ENCODE measurements at regions of chr5 and their contacts with region 1.

Region 1: DNA sequence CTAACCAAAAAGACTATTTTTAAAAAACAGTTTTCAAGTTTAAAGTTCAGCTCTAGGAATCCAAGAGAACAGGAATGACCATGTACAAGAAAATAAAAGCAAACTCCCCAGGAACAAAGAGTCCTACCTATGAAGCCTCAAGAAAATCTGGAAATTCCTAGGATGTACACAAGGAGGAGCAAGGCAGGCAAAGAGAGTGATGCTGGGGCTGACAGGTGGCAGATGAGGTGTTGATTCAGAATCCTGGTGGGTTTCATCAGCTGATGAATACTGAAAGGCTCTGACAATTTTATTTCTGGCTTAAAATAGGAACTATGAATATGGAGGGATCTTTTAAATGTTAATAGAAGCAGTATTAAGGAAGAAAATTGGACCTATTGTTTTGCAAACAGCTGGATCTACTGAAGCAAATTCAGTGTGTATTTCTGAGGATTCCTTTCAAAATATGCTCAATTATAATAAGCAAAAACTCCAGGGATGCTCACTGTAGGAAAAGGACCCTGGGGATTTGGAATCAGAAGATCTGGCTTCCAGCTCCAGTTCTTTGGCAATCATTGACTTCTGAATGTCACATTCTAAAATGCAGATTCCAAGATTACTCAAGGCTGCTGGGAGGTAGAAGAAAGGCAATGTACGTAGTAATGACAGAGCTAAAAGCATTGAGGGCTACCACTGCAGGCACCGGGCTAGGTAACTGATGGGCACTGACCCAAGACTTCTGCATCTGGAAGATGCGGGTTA is 28.0 kb upstream of the SH3RF2 start:
- DNase-seq: peak; percentile 51
- H3K4me3 Mint-ChIP-seq: no peak overlapping the region
- H3K27ac Mint-ChIP-seq: no peak overlapping the region
- H3K4me1 Mint-ChIP-seq: peaks cover 5% of the 10 kb centered on the region
- H3K27me3 Mint-ChIP-seq: no peaks in the 10 kb centered on the region
- CTCF ChIP-seq: peak; percentile 62

Region 2: DNA sequence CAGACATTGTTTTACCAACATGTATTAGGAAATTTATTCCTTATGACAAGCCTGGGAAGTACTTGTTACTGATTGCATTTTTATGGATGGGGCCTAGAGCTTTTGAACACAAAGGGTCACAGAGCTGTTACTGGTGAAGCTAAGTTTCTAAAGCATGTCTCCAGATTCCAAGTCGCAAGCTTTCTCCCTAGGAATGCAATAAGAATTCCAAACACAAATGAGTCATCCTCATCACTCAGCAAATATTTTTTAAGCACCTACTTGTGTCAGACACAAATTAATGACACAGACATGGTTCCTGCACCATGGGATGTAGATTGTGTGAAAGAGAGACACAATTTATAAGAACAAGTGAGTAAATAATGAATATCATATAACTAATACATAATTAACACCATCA is 17.0 kb after region 1 on chr5:
- CTCF ChIA-PET with region 1: interaction called, 47 read pairs
- POLR2A ChIA-PET with region 1: interaction called, 7 read pairs
- intact Hi-C with region 1: no loop called
- DNase-seq: peak; percentile 80
- H3K4me3 Mint-ChIP-seq: no peak overlapping the region
- H3K27ac Mint-ChIP-seq: peak overlapping the region; percentile 84
- H3K4me1 Mint-ChIP-seq: peaks cover 37% of the 10 kb centered on the region
- H3K27me3 Mint-ChIP-seq: no peaks in the 10 kb centered on the region
- CTCF ChIP-seq: no peak

Region 3: GRCh38 chr5:145946112-145946861 is 37.9 kb after region 1 on chr5:
- CTCF ChIA-PET with region 1: interaction called, 31 read pairs
- POLR2A ChIA-PET with region 1: interaction called, 32 read pairs
- intact Hi-C with region 1: no loop called
- DNase-seq: peak; percentile 72
- H3K4me3 Mint-ChIP-seq: no peak overlapping the region
- H3K27ac Mint-ChIP-seq: peak overlapping the region; percentile 32
- H3K4me1 Mint-ChIP-seq: peaks cover 61% of the 10 kb centered on the region
- H3K27me3 Mint-ChIP-seq: no peaks in the 10 kb centered on the region
- CTCF ChIP-seq: no peak

Region 4: GRCh38 chr5:145975361-145976066 is 67.1 kb after region 1 on chr5:
- CTCF ChIA-PET with region 1: interaction called, 20 read pairs
- POLR2A ChIA-PET with region 1: interaction called, 3 read pairs
- intact Hi-C with region 1: loop called (anchors 1 kb)
- DNase-seq: peak; percentile 97
- H3K4me3 Mint-ChIP-seq: no peak overlapping the region
- H3K27ac Mint-ChIP-seq: peak overlapping the region; percentile 89
- H3K4me1 Mint-ChIP-seq: peaks cover 59% of the 10 kb centered on the region
- H3K27me3 Mint-ChIP-seq: no peaks in the 10 kb centered on the region
- CTCF ChIP-seq: no peak

Region 5: GRCh38 chr5:145981589-145982491 is 73.5 kb after region 1 on chr5:
- CTCF ChIA-PET with region 1: interaction called, 20 read pairs
- POLR2A ChIA-PET with region 1: interaction called, 5 read pairs
- intact Hi-C with region 1: loop called (anchors 1 kb)
- DNase-seq: no peak
- H3K4me3 Mint-ChIP-seq: no peak overlapping the region
- H3K27ac Mint-ChIP-seq: peak overlapping the region; percentile 26
- H3K4me1 Mint-ChIP-seq: peaks cover 10% of the 10 kb centered on the region
- H3K27me3 Mint-ChIP-seq: no peaks in the 10 kb centered on the region
- CTCF ChIP-seq: no peak

Region 6: GRCh38 chr5:146007973-146008372 is 99.6 kb after region 1 on chr5:
- CTCF ChIA-PET with region 1: interaction called, 12 read pairs
- POLR2A ChIA-PET with region 1: no interaction called
- intact Hi-C with region 1: no loop called
- DNase-seq: no peak
- H3K4me3 Mint-ChIP-seq: no peak overlapping the region
- H3K27ac Mint-ChIP-seq: no peak overlapping the region
- H3K4me1 Mint-ChIP-seq: no peaks in the 10 kb centered on the region
- H3K27me3 Mint-ChIP-seq: no peaks in the 10 kb centered on the region
- CTCF ChIP-seq: no peak

Region 7: GRCh38 chr5:146041180-146041789 is 132.9 kb after region 1 on chr5:
- CTCF ChIA-PET with region 1: interaction called, 41 read pairs
- POLR2A ChIA-PET with region 1: no interaction called
- intact Hi-C with region 1: no loop called
- DNase-seq: peak; percentile 34
- H3K4me3 Mint-ChIP-seq: no peak overlapping the region
- H3K27ac Mint-ChIP-seq: peak overlapping the region; percentile 62
- H3K4me1 Mint-ChIP-seq: peaks cover 53% of the 10 kb centered on the region
- H3K27me3 Mint-ChIP-seq: no peaks in the 10 kb centered on the region
- CTCF ChIP-seq: no peak

Measured in MCF 10A (cell line).